ENCODE measurements at regions of chr10 and their contacts with region 1.

Region 1: GRCh38 chr10:4849555-4850242 is 23.7 kb downstream of the AKR1E2 start:
- DNase-seq: peak; percentile 90 to 91
- ATAC-seq: peak; percentile 86 to 95 (median 90)
- H3K4me3 ChIP-seq: peak overlapping the region in 1 of 10 donors; percentile 3
- H3K27ac ChIP-seq: peak overlapping the region in 7 of 10 donors; percentile 17 to 68 (median 55)
- H3K4me1 ChIP-seq: peaks cover 5 to 45% (median 28%) of the 10 kb centered on the region in 9 donors
- H3K27me3 ChIP-seq: no peaks in the 10 kb centered on the region
- CTCF ChIP-seq: peak; percentile 96 to 100 (median 98)

Region 2: GRCh38 chr10:4623757-4624420 is 225.8 kb before region 1 on chr10:
- intact Hi-C with region 1: no loop called
- DNase-seq: no peak
- ATAC-seq: no peak
- H3K4me3 ChIP-seq: no peak overlapping the region
- H3K27ac ChIP-seq: no peak overlapping the region
- H3K4me1 ChIP-seq: no peaks in the 10 kb centered on the region
- H3K27me3 ChIP-seq: no peaks in the 10 kb centered on the region
- CTCF ChIP-seq: no peak

Region 3: DNA sequence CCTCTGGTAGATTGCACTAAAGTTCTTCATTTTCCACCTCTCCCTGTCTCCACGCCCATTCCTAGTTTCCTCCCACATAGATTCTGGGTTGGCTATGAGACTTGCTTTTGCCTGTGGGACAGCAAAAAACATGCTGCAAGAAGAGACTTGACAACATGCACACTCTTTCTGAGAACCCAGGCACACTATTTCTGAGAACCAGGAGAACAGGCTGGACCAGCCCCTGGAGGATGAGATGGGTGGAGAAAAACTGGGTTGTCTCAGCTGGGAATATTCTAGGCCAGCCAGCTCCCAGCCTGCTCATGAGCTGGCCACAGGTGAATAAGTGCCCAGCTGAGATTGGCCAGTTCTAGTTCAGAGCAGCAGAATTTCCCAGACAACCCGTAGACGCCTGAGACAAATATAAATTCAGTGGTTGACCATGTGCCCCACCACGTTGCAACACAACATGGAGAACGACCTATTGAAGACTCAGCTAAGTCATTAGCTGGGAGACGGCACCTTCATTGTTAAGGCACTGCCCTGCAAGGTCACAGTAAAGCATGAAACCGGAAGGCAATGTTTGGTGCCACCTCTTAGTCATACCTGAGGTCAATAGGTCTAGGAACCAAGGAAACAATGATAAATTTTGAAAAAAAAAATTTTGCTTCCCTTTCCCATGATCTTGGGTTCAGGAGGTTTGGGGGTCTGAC is 116.4 kb before region 1 on chr10:
- intact Hi-C with region 1: no loop called
- DNase-seq: no peak
- ATAC-seq: no peak
- H3K4me3 ChIP-seq: no peak overlapping the region
- H3K27ac ChIP-seq: no peak overlapping the region
- H3K4me1 ChIP-seq: no peaks in the 10 kb centered on the region
- H3K27me3 ChIP-seq: no peaks in the 10 kb centered on the region
- CTCF ChIP-seq: no peak

Region 4: DNA sequence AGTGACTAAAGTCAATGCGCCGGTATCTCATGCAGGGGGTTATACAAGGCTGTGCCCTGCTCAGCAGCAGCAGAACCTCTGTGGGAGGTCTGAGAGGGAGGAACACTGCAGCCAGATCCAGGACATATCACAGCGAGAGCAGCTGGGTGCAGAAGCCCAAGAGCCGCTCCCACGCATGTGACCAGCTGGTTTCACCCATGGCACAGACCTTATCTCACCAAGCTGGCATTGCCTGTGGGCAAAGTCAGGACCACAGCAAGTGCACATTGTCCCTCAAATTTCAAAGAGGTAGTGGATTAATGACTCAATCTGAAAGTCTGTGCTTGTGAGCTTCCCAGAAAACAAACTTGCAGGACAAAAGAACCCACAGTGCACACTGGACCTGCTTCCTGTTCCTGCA is 81.9 kb after region 1 on chr10:
- intact Hi-C with region 1: no loop called
- DNase-seq: no peak
- ATAC-seq: peak in 2 of 8 donors; percentile 20 to 44
- H3K4me3 ChIP-seq: no peak overlapping the region
- H3K27ac ChIP-seq: no peak overlapping the region
- H3K4me1 ChIP-seq: no peaks in the 10 kb centered on the region
- H3K27me3 ChIP-seq: no peaks in the 10 kb centered on the region
- CTCF ChIP-seq: no peak

Region 5: GRCh38 chr10:4941540-4942330 is 92.0 kb after region 1 on chr10:
- intact Hi-C with region 1: loop called in 1 of 10 experiments (anchors 5 kb)
- DNase-seq: no peak
- ATAC-seq: peak in 6 of 8 donors; percentile 6 to 70 (median 52)
- H3K4me3 ChIP-seq: no peak overlapping the region
- H3K27ac ChIP-seq: peak overlapping the region in 9 of 10 donors; percentile 9 to 78 (median 56)
- H3K4me1 ChIP-seq: peaks cover 0 to 42% (median 20%) of the 10 kb centered on the region in 9 donors
- H3K27me3 ChIP-seq: no peaks in the 10 kb centered on the region
- CTCF ChIP-seq: no peak

Region 6: GRCh38 chr10:5094265-5095205 is 244.8 kb after region 1 on chr10 and contains the start of gene AKR1C3:
- intact Hi-C with region 1: loop called (anchors 1 to 10 kb)
- DNase-seq: peak in 1 of 2 donors; percentile 9
- ATAC-seq: peak; percentile 73 to 93 (median 88)
- H3K4me3 ChIP-seq: peak within 1 kb of the TSS; percentile 13 to 68 (median 62)
- H3K27ac ChIP-seq: peak within 1 kb of the TSS; percentile 33 to 83 (median 62)
- H3K4me1 ChIP-seq: peaks cover 0 to 23% (median 0%) of the 10 kb centered on the region in 9 donors
- H3K27me3 ChIP-seq: no peaks in the 10 kb centered on the region
- CTCF ChIP-seq: peak; percentile 57 to 84 (median 71)
- total RNA-seq, gene AKR1C3: 8.2 to 30.6 (median 18.9) TPM

Region 7: GRCh38 chr10:5376450-5376849 is 526.8 kb after region 1 on chr10:
- intact Hi-C with region 1: loop called in 5 of 10 experiments (anchors 5 to 10 kb)
- DNase-seq: no peak
- ATAC-seq: no peak
- H3K4me3 ChIP-seq: no peak overlapping the region
- H3K27ac ChIP-seq: no peak overlapping the region
- H3K4me1 ChIP-seq: no peaks in the 10 kb centered on the region
- H3K27me3 ChIP-seq: peaks cover 0 to 13% (median 0%) of the 10 kb centered on the region in 7 donors
- CTCF ChIP-seq: no peak

Region 8: GRCh38 chr10:5391790-5392189 is 542.1 kb after region 1 on chr10:
- intact Hi-C with region 1: loop called in 6 of 10 experiments (anchors 5 to 10 kb)
- DNase-seq: no peak
- ATAC-seq: no peak
- H3K4me3 ChIP-seq: no peak overlapping the region
- H3K27ac ChIP-seq: no peak overlapping the region
- H3K4me1 ChIP-seq: no peaks in the 10 kb centered on the region
- H3K27me3 ChIP-seq: no peaks in the 10 kb centered on the region
- CTCF ChIP-seq: no peak

Region 9: DNA sequence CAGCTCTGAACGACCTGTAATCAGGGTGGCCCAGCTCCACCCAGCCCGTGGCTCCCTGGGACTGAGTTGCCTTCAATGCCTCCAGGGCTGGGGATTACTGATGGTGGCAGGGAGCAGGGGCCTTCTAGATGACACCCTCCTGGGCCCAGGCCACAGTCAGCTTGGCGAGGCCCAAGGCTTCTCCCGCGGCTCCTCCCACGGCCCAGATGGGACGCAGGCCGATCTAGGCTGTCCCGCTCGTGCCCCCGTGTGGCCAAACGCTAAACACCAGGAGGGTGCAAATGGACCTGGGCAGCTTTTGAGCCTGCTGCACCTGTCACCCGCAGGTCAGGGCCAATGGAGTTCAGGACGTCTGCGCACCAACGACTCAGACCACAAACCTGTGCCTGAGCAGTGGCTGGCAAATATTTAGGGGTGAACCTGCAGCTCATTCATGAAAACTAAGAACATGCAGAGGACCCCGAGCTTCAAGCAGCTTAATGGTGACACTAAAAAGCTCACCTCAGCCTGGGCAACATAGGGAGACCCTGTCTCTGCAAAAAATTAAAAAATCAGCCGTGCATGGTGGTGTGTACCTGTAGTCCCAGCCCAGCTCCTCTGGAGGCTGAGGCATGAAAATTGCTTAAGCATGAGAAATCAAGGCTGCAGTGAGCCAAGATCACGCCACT is 773.5 kb after region 1 on chr10:
- intact Hi-C with region 1: loop called in 2 of 10 experiments (anchors 10 kb)
- DNase-seq: peak; percentile 88 to 91
- ATAC-seq: peak; percentile 88 to 92 (median 91)
- H3K4me3 ChIP-seq: no peak overlapping the region
- H3K27ac ChIP-seq: peak overlapping the region in 1 of 10 donors; percentile 34
- H3K4me1 ChIP-seq: peaks cover 0 to 26% (median 16%) of the 10 kb centered on the region in 9 donors
- H3K27me3 ChIP-seq: no peaks in the 10 kb centered on the region
- CTCF ChIP-seq: peak; percentile 86 to 96 (median 93)

Measured in heart right ventricle (tissue), 16 donors.